Heart left ventricle (tissue), 16 donors: ENCODE measurements at regions of chr1 and their contacts with region 1.

Region 1: DNA sequence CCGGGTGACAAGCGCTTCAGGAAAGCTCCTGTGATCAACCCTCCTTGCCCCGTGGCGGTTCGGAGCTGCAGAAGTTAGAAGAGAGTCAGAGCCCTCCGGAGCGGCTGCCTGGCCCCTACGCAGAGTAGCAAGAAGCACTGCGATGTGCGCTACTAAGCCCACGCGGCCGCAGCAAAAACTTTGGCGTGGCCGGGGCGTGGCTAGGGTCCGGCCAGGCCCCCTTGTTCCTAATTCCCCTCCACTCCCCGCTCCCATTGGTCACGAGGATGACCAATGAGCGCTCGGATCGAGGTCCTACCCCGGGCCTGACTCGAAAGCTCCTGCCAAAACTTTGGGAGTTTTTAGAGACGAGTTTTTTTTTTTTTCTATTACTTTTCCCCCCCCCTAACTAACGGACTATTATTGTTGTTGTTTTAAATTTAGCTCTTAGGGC is at the start of gene HLX:
- DNase-seq: peak; percentile 94 to 95 (median 95)
- ATAC-seq: peak; percentile 92 to 96 (median 94)
- H3K4me3 ChIP-seq: peak within 1 kb of the TSS; percentile 64 to 99 (median 92)
- H3K27ac ChIP-seq: peak within 1 kb of the TSS; percentile 90 to 99 (median 98)
- H3K4me1 ChIP-seq: peaks cover 0 to 64% (median 34%) of the 10 kb centered on the region in 12 donors
- H3K27me3 ChIP-seq: peaks cover 0 to 39% (median 0%) of the 10 kb centered on the region in 9 donors
- CTCF ChIP-seq: peak in 1 of 12 donors; percentile 8
- POLR2A ChIP-seq: peak; percentile 42 to 90
- total RNA-seq, gene HLX: 3.3 to 14.8 (median 6.7) TPM

Region 2: DNA sequence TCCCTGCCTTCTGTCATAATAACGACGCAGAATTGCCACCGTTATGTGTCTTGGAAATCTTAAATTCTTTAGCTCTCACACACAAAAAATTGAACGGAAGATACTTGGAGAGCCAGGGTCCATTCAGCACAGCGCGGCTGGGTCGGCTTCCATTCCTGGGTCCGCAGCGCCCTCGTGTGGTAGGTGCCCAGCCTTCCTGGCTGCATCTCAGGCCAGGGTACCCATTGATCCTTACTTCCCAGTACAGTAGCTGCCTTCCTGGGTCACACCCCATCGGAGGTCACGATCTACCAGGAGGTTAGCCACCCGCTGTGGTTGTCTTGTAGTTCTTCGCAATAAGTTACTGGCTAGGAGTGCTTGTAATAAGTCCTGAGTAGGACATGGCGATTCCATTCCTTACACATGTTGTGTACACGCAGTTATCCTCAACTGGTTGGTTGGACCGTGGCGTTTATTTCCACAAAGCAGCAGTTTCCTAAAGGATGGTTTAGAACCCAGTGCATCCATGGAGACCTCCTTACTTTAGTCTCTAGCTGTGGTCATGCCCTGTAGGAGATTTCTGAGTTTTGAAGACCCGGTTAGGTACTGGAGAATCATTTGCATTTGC is 102.3 kb before region 1 on chr1:
- intact Hi-C with region 1: no loop called
- DNase-seq: peak; percentile 78 to 88 (median 80)
- ATAC-seq: peak; percentile 87 to 97 (median 94)
- H3K4me3 ChIP-seq: no peak overlapping the region
- H3K27ac ChIP-seq: no peak overlapping the region
- H3K4me1 ChIP-seq: peaks cover 0 to 9% (median 0%) of the 10 kb centered on the region in 12 donors
- H3K27me3 ChIP-seq: no peaks in the 10 kb centered on the region
- CTCF ChIP-seq: peak; percentile 76 to 97 (median 94)
- POLR2A ChIP-seq: no peak

Region 3: DNA sequence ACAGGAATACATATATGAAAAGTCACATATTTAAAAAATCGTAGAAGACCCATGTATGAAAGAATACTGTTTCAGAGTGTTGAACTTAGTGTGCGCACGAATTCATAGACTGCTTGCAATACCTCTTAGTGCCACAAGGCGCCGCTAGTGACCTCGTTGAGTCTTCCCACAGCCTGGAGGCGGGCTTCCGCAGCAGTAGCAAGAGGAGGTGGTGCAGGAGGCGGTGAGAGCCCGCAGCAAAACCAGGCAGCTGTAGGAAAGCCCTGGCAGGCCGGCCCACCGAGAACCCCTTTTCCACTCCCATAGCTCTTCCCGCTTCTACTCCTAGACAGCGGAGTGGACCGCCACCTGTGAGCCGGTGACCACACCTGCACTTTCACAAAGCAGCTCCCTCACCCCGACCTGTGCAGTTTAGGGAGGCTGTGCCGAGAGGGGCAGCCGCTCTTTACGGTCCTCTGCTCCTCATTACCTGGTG is 68.9 kb before region 1 on chr1:
- intact Hi-C with region 1: loop called in 6 of 10 experiments (anchors 1 to 5 kb)
- DNase-seq: peak; percentile 77 to 88 (median 84)
- ATAC-seq: peak; percentile 62 to 91 (median 80)
- H3K4me3 ChIP-seq: peak overlapping the region in 10 of 12 donors; percentile 7 to 46 (median 30)
- H3K27ac ChIP-seq: no peak overlapping the region
- H3K4me1 ChIP-seq: peaks cover 0 to 21% (median 7%) of the 10 kb centered on the region in 12 donors
- H3K27me3 ChIP-seq: no peaks in the 10 kb centered on the region
- CTCF ChIP-seq: peak; percentile 88 to 97 (median 94)
- POLR2A ChIP-seq: no peak

Region 4: DNA sequence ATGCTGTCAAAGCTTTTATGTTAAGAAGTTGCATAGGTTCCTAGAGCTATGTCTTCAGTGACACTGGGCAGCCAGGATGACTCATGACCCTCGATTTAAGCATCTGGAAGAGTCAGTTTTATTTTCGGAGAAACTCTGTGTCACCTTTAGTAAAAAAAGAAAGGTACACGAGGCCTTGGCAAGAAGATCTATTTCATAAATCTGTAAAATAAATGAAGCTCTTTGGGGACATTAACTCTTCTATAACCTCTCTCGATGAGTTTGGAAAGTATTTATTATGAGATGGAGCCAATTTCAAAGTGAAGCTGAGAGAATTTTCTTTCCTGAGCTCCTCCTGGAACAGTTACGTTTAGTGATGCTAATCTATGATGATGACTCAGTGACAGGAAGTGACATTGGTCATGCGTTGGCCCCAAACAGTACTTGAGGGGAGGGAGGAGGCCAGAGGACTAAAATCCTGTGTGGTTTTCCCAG is 156.6 kb after region 1 on chr1:
- intact Hi-C with region 1: loop called in 2 of 10 experiments (anchors 5 to 10 kb)
- DNase-seq: peak in 1 of 5 donors; percentile 16
- ATAC-seq: peak in 3 of 4 donors; percentile 54 to 88 (median 69)
- H3K4me3 ChIP-seq: no peak overlapping the region
- H3K27ac ChIP-seq: peak overlapping the region in 2 of 12 donors; percentile 19 to 48
- H3K4me1 ChIP-seq: peaks cover 0 to 37% (median 8%) of the 10 kb centered on the region in 12 donors
- H3K27me3 ChIP-seq: no peaks in the 10 kb centered on the region
- CTCF ChIP-seq: no peak
- POLR2A ChIP-seq: no peak

Region 5: DNA sequence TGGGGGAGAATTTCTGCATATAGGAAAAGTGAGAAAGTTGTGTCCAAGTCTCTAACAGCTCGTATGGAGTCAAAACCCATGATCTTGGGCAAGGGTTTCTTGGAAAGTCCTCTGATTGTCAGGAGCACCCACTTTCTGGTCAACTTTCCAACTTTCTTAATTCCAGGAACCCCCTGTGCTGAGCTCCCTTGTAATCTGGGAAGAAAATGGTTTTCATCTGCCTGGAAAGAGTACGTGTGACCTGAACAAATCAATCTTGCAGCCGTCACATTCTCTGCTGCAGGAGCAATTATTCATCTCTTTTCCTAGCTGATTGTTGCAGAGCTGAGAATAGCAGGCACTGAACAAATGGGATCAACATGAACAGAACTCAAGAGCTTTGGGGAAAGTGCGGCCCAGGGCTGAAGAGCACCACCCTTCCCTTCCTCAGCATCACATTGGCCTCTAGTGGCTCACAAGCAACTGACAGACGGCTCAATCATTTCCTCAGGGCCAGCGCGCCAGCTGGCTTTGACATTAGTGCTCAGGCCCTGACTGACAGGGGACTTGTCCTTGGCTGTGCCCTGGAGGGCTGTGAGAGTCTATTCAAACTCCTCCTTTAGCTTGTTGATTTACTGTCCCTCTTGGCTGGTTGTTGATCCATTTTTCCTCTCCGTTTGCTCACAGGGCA is 295.4 kb after region 1 on chr1:
- intact Hi-C with region 1: loop called in 4 of 10 experiments (anchors 2 to 10 kb)
- DNase-seq: peak; percentile 76 to 87 (median 77)
- ATAC-seq: peak; percentile 99 to 100 (median 99)
- H3K4me3 ChIP-seq: no peak overlapping the region
- H3K27ac ChIP-seq: peak overlapping the region in 2 of 12 donors; percentile 37 to 50
- H3K4me1 ChIP-seq: peaks cover 0 to 15% (median 10%) of the 10 kb centered on the region in 12 donors
- H3K27me3 ChIP-seq: no peaks in the 10 kb centered on the region
- CTCF ChIP-seq: peak; percentile 27 to 67 (median 50)
- POLR2A ChIP-seq: no peak

Region 6: GRCh38 chr1:221263831-221264767 is 385.0 kb after region 1 on chr1:
- intact Hi-C with region 1: loop called in 3 of 10 experiments (anchors 2 to 10 kb)
- DNase-seq: peak in 4 of 5 donors; percentile 35 to 63 (median 52)
- ATAC-seq: peak; percentile 59 to 86 (median 75)
- H3K4me3 ChIP-seq: peak overlapping the region in 1 of 12 donors; percentile 2
- H3K27ac ChIP-seq: peak overlapping the region in 11 of 12 donors; percentile 7 to 73 (median 41)
- H3K4me1 ChIP-seq: peaks cover 0 to 19% (median 11%) of the 10 kb centered on the region in 12 donors
- H3K27me3 ChIP-seq: no peaks in the 10 kb centered on the region
- CTCF ChIP-seq: peak; percentile 39 to 70 (median 54)
- POLR2A ChIP-seq: no peak

Region 7: DNA sequence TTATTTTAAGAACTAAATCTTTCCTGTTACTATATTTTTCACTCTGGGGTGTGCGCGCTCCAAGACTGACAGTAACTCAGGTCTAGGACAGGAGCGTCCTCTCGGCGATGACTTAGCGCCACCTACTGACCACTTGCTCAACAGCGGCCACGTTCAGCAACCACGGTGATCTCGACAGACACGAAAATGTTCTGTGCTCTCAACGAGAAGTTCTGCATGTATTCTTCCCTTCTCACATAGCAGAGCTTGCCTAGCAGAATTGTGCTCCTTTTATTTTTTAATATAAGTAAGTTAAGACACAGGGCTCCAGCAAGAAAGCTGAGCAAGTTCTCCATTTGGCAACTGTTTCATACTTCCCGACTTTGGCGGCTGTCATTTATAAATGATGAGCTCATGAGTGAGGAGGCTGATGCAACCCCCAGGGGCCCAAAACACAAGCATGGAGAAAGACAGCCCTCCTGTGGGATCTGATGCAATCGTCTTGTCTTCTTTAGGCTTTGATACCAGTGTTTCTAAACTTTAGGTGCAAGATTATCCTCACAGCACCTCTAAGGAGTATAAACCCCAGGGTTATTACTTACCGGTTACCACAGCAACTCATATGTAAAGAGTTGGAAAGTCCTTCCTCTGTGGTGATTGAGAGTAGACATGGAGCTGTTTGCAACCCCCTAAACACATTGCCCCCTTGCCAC is 1576.2 kb after region 1 on chr1:
- intact Hi-C with region 1: loop called in 2 of 10 experiments (anchors 10 kb)
- DNase-seq: peak; percentile 81 to 86 (median 85)
- ATAC-seq: peak; percentile 90 to 98 (median 94)
- H3K4me3 ChIP-seq: peak overlapping the region in 6 of 12 donors; percentile 0 to 27 (median 14)
- H3K27ac ChIP-seq: peak overlapping the region in 2 of 12 donors; percentile 5 to 30
- H3K4me1 ChIP-seq: peaks cover 0 to 12% (median 5%) of the 10 kb centered on the region in 12 donors
- H3K27me3 ChIP-seq: peaks cover 0 to 2% (median 0%) of the 10 kb centered on the region in 9 donors
- CTCF ChIP-seq: peak; percentile 86 to 97 (median 92)
- POLR2A ChIP-seq: no peak